GM23248 (cell line): ENCODE measurements at regions of chr12 and their contacts with region 1.

Region 1: DNA sequence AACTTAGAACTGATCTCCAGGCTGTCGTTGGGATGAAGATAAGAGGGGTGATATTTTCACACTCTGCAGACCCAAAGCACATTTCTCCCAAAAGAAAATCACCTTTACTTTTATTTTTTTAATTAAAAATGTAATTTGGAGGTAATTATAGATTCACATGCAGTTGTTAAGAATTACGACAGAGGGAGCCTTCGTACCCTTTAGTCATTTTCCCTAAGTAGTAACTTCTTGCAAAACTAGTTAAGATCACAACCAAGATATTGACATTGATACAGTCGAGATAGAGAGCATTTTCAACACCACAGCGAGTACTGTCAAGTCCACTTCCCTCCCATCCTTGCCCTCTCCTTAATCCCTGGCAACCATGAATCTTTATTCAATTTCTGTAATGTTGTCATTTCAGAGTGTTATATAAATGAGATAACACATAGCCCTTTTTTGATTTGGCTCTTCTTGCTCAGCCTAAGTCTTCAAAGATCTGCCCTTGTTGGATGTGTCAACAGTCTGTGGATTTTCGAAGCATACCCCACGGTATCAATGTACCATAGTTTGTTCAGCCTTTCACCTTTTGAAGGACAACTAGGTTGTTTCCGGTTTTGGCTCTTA is 39.6 kb downstream of the DNAH10 start:
- DNase-seq: peak; percentile 56
- H3K4me3 ChIP-seq: no peak overlapping the region
- H3K27ac ChIP-seq: no peak overlapping the region
- H3K4me1 ChIP-seq: no peaks in the 10 kb centered on the region
- H3K27me3 ChIP-seq: 0 out of 2 replicates have a peak, but pooled peaks cover 3% of the 10 kb centered on the region

Region 2: GRCh38 chr12:123983822-123984485 is 182.3 kb after region 1 on chr12:
- in situ Hi-C with region 1: loop called (anchors 10 kb)
- DNase-seq: peak; percentile 85
- H3K4me3 ChIP-seq: no peak overlapping the region
- H3K27ac ChIP-seq: no peak overlapping the region
- H3K4me1 ChIP-seq: no peaks in the 10 kb centered on the region
- H3K27me3 ChIP-seq: no peaks in the 10 kb centered on the region